Activated CD8-positive, alpha-beta T cell treated with anti-CD3 and anti-CD28 coated beads, Interleukin-2, amount 10 ng/mL, durations not matched to agents 7 days and 5 days (primary cell): ENCODE measurements at regions of chr9 and their contacts with region 1.

Region 1: GRCh38 chr9:97921959-97922724 is at the start of gene TRMO:
- DNase-seq: peak; percentile 98
- ATAC-seq: peak; percentile 85
- H3K4me3 Mint-ChIP-seq: peak within 1 kb of the TSS; percentile 89
- H3K27ac Mint-ChIP-seq: peak within 1 kb of the TSS; percentile 97
- H3K4me1 Mint-ChIP-seq: peaks cover 49% of the 10 kb centered on the region
- H3K27me3 Mint-ChIP-seq: peaks cover 2% of the 10 kb centered on the region
- total RNA-seq, gene TRMO: 18.7 to 19.2 TPM

Region 2: DNA sequence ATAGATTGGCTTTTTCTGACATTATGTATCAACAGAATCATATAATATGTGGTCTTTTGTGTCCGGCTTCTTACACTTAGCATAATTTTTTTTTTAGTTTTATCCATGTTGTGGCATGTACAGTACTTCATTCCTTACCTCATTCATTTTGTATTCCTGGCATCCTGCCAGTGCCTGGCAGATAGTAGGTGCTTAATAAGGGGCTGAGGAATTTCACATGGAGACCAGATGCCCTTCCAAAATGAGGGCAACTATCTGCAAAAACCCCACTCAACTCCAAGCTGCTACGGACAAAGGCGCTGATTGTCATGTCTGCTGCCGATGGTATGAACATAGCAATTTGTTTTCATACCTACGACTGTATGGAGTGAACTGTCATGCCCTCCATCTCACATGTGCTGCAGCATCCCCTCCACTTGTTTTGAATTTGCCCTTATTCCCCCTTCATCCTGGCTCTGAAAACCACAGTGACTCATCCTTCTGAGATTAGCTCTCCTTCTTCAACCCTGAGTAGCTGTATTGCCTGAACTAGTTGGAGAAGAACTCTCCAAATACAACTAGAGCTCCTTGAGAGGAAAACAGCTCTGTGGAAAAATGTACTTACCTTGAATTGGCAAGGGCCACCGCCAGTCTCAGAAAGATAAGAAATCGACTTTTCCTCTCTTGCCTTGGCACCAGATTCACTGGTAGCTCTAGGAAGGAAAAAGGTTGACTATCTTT is 110.5 kb before region 1 on chr9:
- CTCF ChIA-PET with region 1: no interaction called
- POLR2A ChIA-PET with region 1: no interaction called
- DNase-seq: no peak
- ATAC-seq: no peak
- H3K4me3 Mint-ChIP-seq: no peak overlapping the region
- H3K27ac Mint-ChIP-seq: no peak overlapping the region
- H3K4me1 Mint-ChIP-seq: no peaks in the 10 kb centered on the region
- H3K27me3 Mint-ChIP-seq: peaks cover 20% of the 10 kb centered on the region

Region 3: DNA sequence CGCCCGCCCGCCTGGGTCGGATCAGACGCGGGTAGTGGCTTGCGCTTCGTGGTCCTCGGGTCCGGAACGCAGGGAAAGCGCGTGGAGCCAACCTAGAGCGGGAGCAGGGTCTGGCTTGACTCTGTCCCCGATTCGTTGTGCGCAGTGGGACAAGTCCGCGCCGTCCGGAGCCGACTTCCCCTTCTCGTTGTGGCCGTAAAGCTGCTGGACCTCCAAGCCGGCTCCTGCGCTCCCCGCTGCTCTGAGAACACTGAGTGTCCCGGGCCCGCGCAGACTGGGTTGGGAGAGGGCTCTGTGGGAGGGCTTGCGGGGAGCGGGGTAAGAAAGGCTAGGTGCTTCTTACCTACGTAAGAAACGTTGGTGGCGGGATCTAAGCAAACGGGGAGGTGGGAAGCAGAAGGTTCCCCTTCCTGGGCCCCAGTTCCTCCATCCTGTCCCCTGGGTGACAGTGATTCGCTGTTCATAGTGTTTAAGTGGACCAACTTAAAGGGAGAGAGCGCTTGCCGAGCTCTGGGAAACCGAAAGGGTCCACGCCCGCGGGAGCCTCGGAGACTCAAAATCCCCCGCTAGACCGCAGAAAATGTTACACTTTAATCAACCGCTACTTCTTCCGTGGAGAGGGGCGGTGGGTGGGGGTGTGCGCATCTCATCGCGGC is 73.4 kb before region 1 on chr9:
- CTCF ChIA-PET with region 1: no interaction called
- POLR2A ChIA-PET with region 1: no interaction called
- DNase-seq: no peak
- ATAC-seq: no peak
- H3K4me3 Mint-ChIP-seq: peak overlapping the region; percentile 56
- H3K27ac Mint-ChIP-seq: no peak overlapping the region
- H3K4me1 Mint-ChIP-seq: peaks cover 14% of the 10 kb centered on the region
- H3K27me3 Mint-ChIP-seq: peaks cover 81% of the 10 kb centered on the region

Region 4: GRCh38 chr9:97873877-97874276 is 48.3 kb before region 1 on chr9:
- CTCF ChIA-PET with region 1: no interaction called
- POLR2A ChIA-PET with region 1: no interaction called
- DNase-seq: no peak
- ATAC-seq: no peak
- H3K4me3 Mint-ChIP-seq: no peak overlapping the region
- H3K27ac Mint-ChIP-seq: no peak overlapping the region
- H3K4me1 Mint-ChIP-seq: no peaks in the 10 kb centered on the region
- H3K27me3 Mint-ChIP-seq: peaks cover 19% of the 10 kb centered on the region

Region 5: DNA sequence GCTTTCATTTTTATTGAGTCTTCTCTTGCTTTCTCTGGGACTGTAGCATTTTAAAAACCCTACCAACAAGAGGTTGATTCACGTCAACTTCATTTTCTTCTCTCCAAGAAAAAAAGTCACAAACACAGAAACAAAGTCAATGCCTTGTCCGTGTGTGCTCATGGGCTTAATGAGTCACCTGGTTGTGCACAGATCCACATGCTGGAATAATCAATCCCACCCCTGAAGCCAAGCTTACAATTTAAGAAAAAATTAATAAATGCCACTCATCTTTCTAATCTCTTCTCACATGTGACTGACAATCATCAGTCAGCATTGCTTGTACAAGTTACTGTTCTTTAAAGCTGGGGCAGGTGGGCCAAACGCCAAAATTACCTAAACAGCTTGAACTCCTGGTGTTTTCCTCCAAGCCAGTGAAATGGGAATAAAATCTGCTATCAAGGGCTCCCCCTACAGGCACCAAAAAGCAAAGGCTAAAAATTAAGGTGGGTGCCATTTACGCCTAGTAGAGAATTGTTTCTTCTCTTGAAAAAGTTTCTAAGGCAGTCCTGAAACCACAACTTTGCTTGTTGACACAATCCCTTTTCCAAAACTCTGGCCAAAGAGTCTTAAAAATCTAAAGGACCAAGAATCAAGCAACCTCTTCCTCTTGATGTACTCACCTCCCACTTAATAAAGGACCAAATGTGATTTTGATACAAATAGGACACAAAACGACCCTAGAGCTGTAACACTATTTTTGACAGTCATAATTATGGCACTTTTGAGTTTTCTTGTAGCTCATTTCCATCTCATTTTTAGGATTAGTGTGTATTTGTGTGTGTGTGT is 21.2 kb before region 1 on chr9:
- CTCF ChIA-PET with region 1: interaction called, 222 read pairs
- POLR2A ChIA-PET with region 1: interaction called, 76 read pairs
- DNase-seq: peak; percentile 46
- ATAC-seq: no peak
- H3K4me3 Mint-ChIP-seq: no peak overlapping the region
- H3K27ac Mint-ChIP-seq: no peak overlapping the region
- H3K4me1 Mint-ChIP-seq: peaks cover 43% of the 10 kb centered on the region
- H3K27me3 Mint-ChIP-seq: no peaks in the 10 kb centered on the region

Region 6: GRCh38 chr9:97938081-97938644 is 16.0 kb after region 1 on chr9 and contains the start of gene HEMGN:
- CTCF ChIA-PET with region 1: interaction called, 74 read pairs
- POLR2A ChIA-PET with region 1: interaction called, 3 read pairs
- DNase-seq: peak; percentile 59
- ATAC-seq: peak; percentile 90
- H3K4me3 Mint-ChIP-seq: peak within 1 kb of the TSS; percentile 32
- H3K27ac Mint-ChIP-seq: peak within 1 kb of the TSS; percentile 85
- H3K4me1 Mint-ChIP-seq: peaks cover 33% of the 10 kb centered on the region
- H3K27me3 Mint-ChIP-seq: peaks cover 6% of the 10 kb centered on the region
- total RNA-seq, gene HEMGN: 1.2 to 1.6 TPM

Region 7: GRCh38 chr9:97961361-97961760 is 39.2 kb after region 1 on chr9:
- CTCF ChIA-PET with region 1: interaction called, 106 read pairs
- POLR2A ChIA-PET with region 1: interaction called, 7 read pairs
- DNase-seq: no peak
- ATAC-seq: no peak
- H3K4me3 Mint-ChIP-seq: no peak overlapping the region
- H3K27ac Mint-ChIP-seq: no peak overlapping the region
- H3K4me1 Mint-ChIP-seq: no peaks in the 10 kb centered on the region
- H3K27me3 Mint-ChIP-seq: peaks cover 11% of the 10 kb centered on the region

Region 8: DNA sequence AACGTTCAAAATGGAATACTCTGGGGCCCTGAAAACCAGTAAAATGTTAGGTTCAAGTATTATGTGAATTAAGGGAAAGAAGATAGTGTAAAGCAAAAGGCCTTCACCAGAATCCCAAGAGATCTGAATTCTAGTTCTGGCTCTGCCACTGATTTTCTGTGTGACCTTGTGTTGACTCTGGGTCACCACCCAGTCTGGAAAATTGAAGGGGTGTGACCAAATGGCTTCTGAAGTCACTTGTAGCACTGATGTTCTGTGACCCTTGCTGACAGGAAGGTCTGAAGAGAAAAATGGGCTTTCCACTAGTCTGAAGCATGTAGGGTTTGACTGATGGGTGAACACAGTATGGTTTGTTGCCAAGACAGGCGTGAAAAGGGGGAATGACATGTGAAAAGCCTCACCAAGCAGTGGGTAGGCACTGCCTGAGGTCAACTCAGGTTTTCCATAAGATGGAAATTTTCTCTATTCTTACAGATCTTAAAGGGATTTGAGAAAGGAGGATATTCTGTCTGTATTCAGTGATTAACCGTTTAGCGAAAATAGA is 94.1 kb after region 1 on chr9:
- CTCF ChIA-PET with region 1: interaction called, 19 read pairs
- POLR2A ChIA-PET with region 1: interaction called, 5 read pairs
- DNase-seq: no peak
- ATAC-seq: no peak
- H3K4me3 Mint-ChIP-seq: no peak overlapping the region
- H3K27ac Mint-ChIP-seq: peak overlapping the region; percentile 5
- H3K4me1 Mint-ChIP-seq: no peaks in the 10 kb centered on the region
- H3K27me3 Mint-ChIP-seq: no peaks in the 10 kb centered on the region

Region 9: GRCh38 chr9:98056269-98057137 is 134.4 kb after region 1 on chr9 and contains the start of gene NANS:
- CTCF ChIA-PET with region 1: interaction called, 25 read pairs
- POLR2A ChIA-PET with region 1: interaction called, 9 read pairs
- DNase-seq: peak; percentile 95
- ATAC-seq: peak; percentile 95
- H3K4me3 Mint-ChIP-seq: peak within 1 kb of the TSS; percentile 99
- H3K27ac Mint-ChIP-seq: peak within 1 kb of the TSS; percentile 99
- H3K4me1 Mint-ChIP-seq: peaks cover 39% of the 10 kb centered on the region
- H3K27me3 Mint-ChIP-seq: no peaks in the 10 kb centered on the region
- total RNA-seq, gene NANS: 45.5 to 46.6 TPM